ENCODE measurements at regions of chr5 and their contacts with region 1.

Region 1: GRCh38 chr5:169701910-169702451 is 64.9 kb downstream of the DOCK2 start:
- DNase-seq: no peak
- H3K4me3 ChIP-seq: no peak overlapping the region
- H3K27ac ChIP-seq: no peak overlapping the region
- H3K4me1 ChIP-seq: peaks cover under 1 to 8% of the 10 kb centered on the region in 2 donors
- H3K27me3 ChIP-seq: no peaks in the 10 kb centered on the region
- CTCF ChIP-seq: peak; percentile 23 to 69 (median 62)
- POLR2A ChIP-seq: no peak

Region 2: DNA sequence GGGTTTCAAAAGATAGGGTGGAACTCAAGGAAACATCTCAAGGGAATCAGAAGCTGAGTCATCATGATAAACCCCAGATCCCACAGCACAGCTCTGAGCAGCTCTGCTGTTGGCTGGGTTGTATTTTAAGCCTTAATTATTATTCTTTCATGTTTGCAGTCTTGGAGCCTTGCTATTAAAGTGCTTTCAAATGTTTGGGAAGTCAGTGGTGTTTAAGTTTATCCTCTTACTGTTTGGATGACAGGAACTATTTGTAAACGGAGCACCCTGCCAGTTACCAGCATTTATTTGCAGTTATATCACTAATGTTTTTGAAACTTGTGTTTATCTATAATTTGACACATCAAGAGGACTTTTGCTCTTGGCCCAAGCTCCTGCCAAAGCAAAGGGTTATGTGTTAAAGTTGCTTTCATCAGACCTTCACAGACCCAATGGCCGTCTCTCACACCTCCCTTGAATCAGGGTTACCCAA is 259.5 kb before region 1 on chr5:
- intact Hi-C with region 1: no loop called
- DNase-seq: no peak
- H3K4me3 ChIP-seq: no peak overlapping the region
- H3K27ac ChIP-seq: no peak overlapping the region
- H3K4me1 ChIP-seq: no peaks in the 10 kb centered on the region
- H3K27me3 ChIP-seq: no peaks in the 10 kb centered on the region
- CTCF ChIP-seq: no peak
- POLR2A ChIP-seq: no peak

Region 3: DNA sequence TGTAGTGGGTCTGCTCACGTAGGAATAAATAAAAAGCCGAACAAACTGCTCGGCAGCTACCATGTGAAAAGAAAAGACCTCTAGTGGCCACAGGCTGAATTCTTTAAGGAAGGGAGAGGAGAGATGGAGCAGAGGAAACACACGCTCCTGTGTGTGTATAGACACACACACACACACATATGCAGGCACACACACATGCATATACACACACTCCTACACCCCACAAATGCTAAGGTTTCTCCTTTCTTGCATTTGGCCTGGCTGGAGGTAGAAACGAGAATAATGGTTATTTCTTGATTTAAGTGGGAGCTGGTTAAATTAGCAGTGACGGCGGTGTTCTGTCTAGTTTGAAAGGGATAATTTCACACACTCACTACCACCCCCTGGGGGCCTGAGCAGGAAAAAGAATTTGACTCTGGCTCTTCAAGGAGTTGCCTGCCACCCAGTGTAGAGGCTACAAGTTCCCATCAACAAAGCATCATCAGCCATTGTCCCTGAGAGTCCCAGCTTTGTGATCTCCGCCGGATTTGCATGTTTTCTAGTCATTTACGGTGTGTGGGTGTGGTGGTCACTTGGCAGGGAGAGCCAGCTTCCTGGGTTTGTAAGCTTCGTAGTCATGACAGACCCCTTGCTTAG is 278.6 kb after region 1 on chr5 and contains the start of gene INSYN2B:
- intact Hi-C with region 1: loop called (anchors 5 kb)
- DNase-seq: peak; percentile 75 to 89 (median 82)
- H3K4me3 ChIP-seq: peak within 1 kb of the TSS in 1 of 4 donors; percentile 28
- H3K27ac ChIP-seq: no peak within 1 kb of the TSS
- H3K4me1 ChIP-seq: peaks cover 0 to 7% of the 10 kb centered on the region in 2 donors
- H3K27me3 ChIP-seq: no peaks in the 10 kb centered on the region
- CTCF ChIP-seq: peak; percentile 45 to 89 (median 72)
- POLR2A ChIP-seq: no peak
- total RNA-seq, gene INSYN2B: 0.14 to 0.94 (median 0.80) TPM in 8 of 9 donors, not detected in the other

Region 4: DNA sequence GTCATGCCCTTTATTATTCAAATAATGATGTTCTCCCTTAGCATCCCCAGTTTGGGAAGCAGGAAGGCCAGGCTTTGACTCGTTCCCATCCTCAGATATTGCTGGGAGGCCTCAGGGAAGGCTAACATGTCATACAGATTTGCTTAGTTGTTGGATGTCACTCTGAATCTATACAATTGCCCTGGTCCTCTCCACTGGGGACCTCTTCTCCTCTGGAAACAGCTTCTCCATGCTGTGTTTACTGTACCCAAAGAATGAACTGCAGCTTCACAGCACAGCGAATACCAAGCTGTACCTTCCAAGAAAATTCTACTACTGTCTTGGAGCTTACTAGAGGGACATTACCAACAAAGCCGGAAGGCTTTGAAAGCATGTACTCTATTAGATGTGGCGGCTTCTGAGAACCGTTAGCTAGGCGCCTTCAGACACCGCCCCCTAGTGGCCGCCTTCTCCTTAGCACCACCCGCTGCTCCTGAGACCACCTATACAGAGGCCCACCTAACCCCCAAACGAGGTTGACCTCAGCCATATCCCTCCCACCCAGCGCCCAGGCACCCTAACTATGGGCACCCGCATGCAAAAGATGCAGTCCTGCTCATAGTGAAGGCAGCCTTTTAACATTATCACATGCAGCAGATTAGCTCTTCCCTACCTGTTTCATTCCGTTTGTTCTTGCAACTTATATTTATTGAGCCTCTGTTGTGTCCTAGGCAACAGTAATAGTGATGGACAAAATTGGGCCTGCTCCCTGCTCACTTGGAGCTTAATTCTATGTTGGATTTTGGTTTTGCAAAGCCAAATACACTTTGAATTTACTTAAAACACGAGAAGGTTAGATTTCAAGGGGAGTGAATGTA is 368.8 kb after region 1 on chr5:
- intact Hi-C with region 1: loop called in 1 of 2 experiments (anchors 5 kb)
- DNase-seq: peak in 6 of 7 donors; percentile 28 to 64 (median 40)
- H3K4me3 ChIP-seq: no peak overlapping the region
- H3K27ac ChIP-seq: no peak overlapping the region
- H3K4me1 ChIP-seq: no peaks in the 10 kb centered on the region
- H3K27me3 ChIP-seq: no peaks in the 10 kb centered on the region
- CTCF ChIP-seq: peak; percentile 37 to 67 (median 56)
- POLR2A ChIP-seq: no peak

Region 5: DNA sequence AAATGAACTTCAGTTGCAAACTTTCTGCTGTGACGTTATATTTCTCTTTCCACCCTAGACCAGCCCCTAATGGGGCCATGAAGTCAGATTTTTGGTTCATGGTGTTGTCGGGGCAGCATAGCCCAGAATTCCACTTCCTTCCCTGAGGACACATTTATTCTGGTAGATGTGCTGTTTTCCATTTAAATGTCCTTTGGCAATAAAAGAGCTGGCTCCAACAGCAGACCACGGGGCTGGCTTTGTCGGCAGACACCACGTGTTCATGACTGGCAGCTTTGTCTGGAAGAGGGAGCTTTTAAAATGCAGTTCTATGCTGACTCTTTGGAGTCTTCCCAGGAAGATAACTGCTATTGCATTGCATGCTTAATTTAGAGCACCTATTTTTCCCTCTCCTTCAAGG is 613.2 kb after region 1 on chr5:
- intact Hi-C with region 1: no loop called
- DNase-seq: peak; percentile 50 to 90 (median 72)
- H3K4me3 ChIP-seq: no peak overlapping the region
- H3K27ac ChIP-seq: peak overlapping the region in 3 of 5 donors; percentile 25 to 84 (median 71)
- H3K4me1 ChIP-seq: peaks cover 10 to 16% of the 10 kb centered on the region in 2 donors
- H3K27me3 ChIP-seq: no peaks in the 10 kb centered on the region
- CTCF ChIP-seq: no peak
- POLR2A ChIP-seq: no peak

Measured in adrenal gland (tissue), 19 donors.